B cell (primary cell): ENCODE measurements at regions of chr12 and their contacts with region 1.

Region 1: DNA sequence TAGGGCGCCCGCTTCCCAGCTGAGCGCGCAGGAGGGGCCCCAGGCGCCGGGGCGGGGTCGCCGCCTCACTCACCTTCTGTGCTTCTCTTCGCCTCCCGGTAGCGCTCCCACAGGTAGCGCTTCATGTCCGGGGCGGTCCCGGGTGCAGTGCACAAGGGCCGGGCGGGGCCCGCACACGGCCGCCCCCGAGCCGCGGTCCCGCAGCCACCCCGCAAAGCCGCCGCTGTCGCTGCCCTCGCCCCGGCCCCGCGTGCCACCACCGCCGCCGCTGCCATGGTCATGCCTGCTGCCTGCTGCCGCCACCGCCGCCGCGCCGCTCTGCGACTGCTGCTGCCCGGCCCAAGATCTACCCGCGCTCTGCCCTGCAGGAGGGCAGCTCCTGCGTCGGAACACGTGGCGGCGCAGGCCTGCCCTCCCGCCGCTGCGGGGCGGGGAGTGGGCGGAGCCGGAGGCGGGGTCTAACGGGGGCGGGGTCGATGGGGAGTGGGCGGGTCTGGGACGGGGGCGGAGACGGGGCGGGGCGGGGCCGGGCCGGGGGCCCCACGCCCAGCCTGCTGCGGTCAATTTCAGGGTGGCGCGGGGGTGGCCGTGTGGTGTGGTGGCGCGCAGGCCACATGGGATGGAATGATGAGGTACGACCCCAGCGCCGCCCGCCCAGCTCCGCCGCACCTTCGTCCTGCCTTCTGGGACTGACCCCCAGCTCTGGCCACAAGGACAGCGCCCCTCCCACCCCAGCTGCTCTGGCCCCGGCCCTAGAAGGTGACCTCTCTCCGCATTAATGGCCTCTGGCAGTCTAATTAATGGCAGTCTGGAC is at the start of gene NT5DC3:
- DNase-seq: peak; percentile 92
- ATAC-seq: peak; percentile 91
- H3K4me3 ChIP-seq: peak within 1 kb of the TSS in 4 of 5 experiments; percentile 50 to 86 (median 76)
- H3K4me3 Mint-ChIP-seq: peak within 1 kb of the TSS; percentile 89
- H3K27ac ChIP-seq: no peak within 1 kb of the TSS
- H3K27ac Mint-ChIP-seq: peak within 1 kb of the TSS; percentile 88
- H3K4me1 ChIP-seq: peaks cover 14 to 22% of the 10 kb centered on the region in 2 donors
- H3K4me1 Mint-ChIP-seq: peaks cover 27% of the 10 kb centered on the region
- H3K27me3 ChIP-seq: no peaks in the 10 kb centered on the region
- H3K27me3 Mint-ChIP-seq: no peaks in the 10 kb centered on the region
- CTCF ChIP-seq: no peak
- total RNA-seq, gene NT5DC3: 10.6 and 14.7 TPM in 2 replicates

Region 2: DNA sequence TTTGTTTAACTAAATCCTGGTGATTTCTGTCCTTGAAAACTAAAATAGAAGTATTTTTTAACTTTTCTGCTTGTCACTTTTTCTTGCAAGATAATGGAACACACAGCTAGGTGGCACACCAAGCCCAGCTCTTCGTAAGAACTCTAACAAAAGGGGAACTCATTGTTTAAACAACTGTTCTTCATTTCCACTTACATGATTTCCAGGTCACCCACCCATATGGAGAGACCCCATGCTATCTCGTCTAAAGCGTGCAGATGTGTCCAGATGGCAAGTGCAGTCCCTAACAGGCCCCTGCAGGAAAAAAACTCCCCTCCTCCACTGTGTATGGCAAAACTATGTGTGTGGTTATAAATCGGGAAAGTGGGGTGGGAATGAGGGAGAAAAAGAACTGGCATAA is 43.2 kb after region 1 on chr12:
- CTCF ChIA-PET with region 1: no interaction called
- POLR2A ChIA-PET with region 1: no interaction called
- intact Hi-C with region 1: no loop called
- DNase-seq: peak; percentile 55
- ATAC-seq: peak; percentile 56
- H3K4me3 ChIP-seq: no peak overlapping the region
- H3K4me3 Mint-ChIP-seq: no peak overlapping the region
- H3K27ac ChIP-seq: no peak overlapping the region
- H3K27ac Mint-ChIP-seq: no peak overlapping the region
- H3K4me1 ChIP-seq: peaks cover 11 to 15% of the 10 kb centered on the region in 2 donors
- H3K4me1 Mint-ChIP-seq: peaks cover 22% of the 10 kb centered on the region
- H3K27me3 ChIP-seq: no peaks in the 10 kb centered on the region
- H3K27me3 Mint-ChIP-seq: no peaks in the 10 kb centered on the region
- CTCF ChIP-seq: peak; percentile 65

Region 3: DNA sequence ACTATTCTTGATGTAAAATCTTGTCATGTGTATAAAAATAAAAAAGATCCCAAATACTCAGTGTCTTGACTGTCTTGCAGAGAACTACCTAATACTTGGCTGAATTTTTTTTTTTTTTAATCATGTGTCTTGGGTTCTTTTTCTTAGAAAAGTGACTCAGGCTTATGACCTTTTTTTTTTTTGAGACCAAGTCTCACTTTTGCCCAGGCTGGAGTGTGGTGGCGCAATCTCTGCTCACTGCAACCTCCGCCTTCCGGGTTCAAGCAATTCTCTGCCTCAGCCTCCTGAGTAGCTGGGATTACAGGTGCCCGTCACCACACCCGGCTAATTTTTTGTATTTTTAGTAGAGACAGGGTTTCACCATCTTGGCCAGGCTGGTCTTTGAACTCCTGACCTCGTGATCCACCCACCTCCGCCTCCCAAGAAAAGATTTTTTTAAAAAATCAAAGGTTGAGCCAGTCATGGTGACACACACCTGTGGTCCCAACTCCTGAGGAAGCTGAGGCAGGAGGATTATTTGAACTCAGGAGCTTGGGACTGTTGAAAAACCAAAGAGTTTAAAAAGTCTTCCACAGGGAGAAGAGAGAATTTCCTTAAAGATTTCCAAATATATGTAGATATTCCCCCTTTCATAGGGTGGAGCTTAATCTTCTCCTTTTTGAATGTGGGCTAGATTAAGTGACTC is 106.9 kb after region 1 on chr12:
- CTCF ChIA-PET with region 1: no interaction called
- POLR2A ChIA-PET with region 1: no interaction called
- intact Hi-C with region 1: no loop called
- DNase-seq: no peak
- ATAC-seq: no peak
- H3K4me3 ChIP-seq: no peak overlapping the region
- H3K4me3 Mint-ChIP-seq: no peak overlapping the region
- H3K27ac ChIP-seq: no peak overlapping the region
- H3K27ac Mint-ChIP-seq: no peak overlapping the region
- H3K4me1 ChIP-seq: no peaks in the 10 kb centered on the region
- H3K4me1 Mint-ChIP-seq: peaks cover 3% of the 10 kb centered on the region
- H3K27me3 ChIP-seq: no peaks in the 10 kb centered on the region
- H3K27me3 Mint-ChIP-seq: no peaks in the 10 kb centered on the region
- CTCF ChIP-seq: no peak

Region 4: DNA sequence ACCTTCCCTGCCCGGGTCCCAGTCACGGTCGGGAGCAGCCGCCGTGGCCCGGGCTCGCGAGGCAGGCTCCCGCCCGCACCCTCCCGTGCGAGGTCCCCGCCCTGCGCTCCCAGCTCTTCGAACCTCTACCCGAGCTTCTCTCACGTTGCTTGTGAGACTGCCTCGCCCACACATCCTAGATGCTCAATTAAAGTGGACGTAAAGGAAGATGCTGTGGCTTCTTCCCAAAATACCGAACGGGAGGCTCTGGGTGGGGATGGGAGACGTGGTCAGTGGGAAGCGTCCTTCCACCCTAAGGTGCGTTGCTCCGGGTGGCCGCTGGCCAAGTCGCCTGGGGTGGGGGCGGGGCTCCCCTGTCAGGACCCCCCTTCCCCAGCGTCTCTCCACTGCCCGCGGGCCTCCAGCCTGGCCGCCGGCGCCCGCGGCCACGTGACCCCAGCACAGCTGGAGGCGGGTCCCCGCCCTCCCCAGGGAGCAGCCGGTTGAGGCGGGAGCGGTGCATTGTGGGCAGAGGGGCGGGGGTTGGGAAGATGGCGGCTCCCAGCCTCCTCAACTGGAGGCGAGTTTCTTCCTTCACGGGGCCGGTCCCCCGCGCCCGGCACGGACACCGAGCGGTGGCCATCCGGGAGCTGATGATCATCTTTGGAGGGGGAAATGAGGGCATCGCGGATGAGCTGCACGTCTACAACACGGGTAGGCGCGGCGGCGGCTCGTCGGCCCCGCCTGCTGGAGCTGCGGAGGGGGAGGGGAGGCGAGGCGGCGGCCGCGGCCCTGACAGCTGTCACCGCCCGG is 223.1 kb after region 1 on chr12 and contains the start of gene HCFC2:
- CTCF ChIA-PET with region 1: no interaction called
- POLR2A ChIA-PET with region 1: no interaction called
- intact Hi-C with region 1: loop called (anchors 2 kb)
- DNase-seq: peak; percentile 94
- ATAC-seq: peak; percentile 92
- H3K4me3 ChIP-seq: peak within 1 kb of the TSS; percentile 80 to 95 (median 85)
- H3K4me3 Mint-ChIP-seq: peak within 1 kb of the TSS; percentile 94
- H3K27ac ChIP-seq: peak within 1 kb of the TSS; percentile 36 to 79
- H3K27ac Mint-ChIP-seq: peak within 1 kb of the TSS; percentile 93
- H3K4me1 ChIP-seq: peaks cover 10 to 14% of the 10 kb centered on the region in 2 donors
- H3K4me1 Mint-ChIP-seq: peaks cover 17% of the 10 kb centered on the region
- H3K27me3 ChIP-seq: no peaks in the 10 kb centered on the region
- H3K27me3 Mint-ChIP-seq: peaks cover 9% of the 10 kb centered on the region
- CTCF ChIP-seq: no peak
- total RNA-seq, gene HCFC2: 10.5 and 11.6 TPM in 2 replicates

Region 5: GRCh38 chr12:104303538-104304151 is 462.6 kb after region 1 on chr12 and contains the start of gene EID3:
- CTCF ChIA-PET with region 1: no interaction called
- POLR2A ChIA-PET with region 1: no interaction called
- intact Hi-C with region 1: loop called (anchors 5 kb)
- DNase-seq: peak; percentile 89
- ATAC-seq: peak; percentile 97
- H3K4me3 ChIP-seq: peak within 1 kb of the TSS; percentile 19 to 74 (median 62)
- H3K4me3 Mint-ChIP-seq: peak within 1 kb of the TSS; percentile 89
- H3K27ac ChIP-seq: peak within 1 kb of the TSS; percentile 54 to 74
- H3K27ac Mint-ChIP-seq: peak within 1 kb of the TSS; percentile 86
- H3K4me1 ChIP-seq: peaks cover 15 to 19% of the 10 kb centered on the region in 2 donors
- H3K4me1 Mint-ChIP-seq: peaks cover 52% of the 10 kb centered on the region
- H3K27me3 ChIP-seq: no peaks in the 10 kb centered on the region
- H3K27me3 Mint-ChIP-seq: no peaks in the 10 kb centered on the region
- CTCF ChIP-seq: no peak
- total RNA-seq, gene EID3: 9.2 and 9.4 TPM in 2 replicates